Ovary (tissue), 10 donors: ENCODE measurements at regions of chr11 and their contacts with region 1.

Region 1: GRCh38 chr11:65569973-65570918 is at the start of gene ZNRD2:
- DNase-seq: peak; percentile 96 to 98 (median 98)
- H3K4me3 ChIP-seq: peak within 1 kb of the TSS; percentile 83
- H3K27ac ChIP-seq: peak within 1 kb of the TSS; percentile 87 to 91
- H3K4me1 ChIP-seq: peaks cover 8% of the 10 kb centered on the region
- H3K27me3 ChIP-seq: no peaks in the 10 kb centered on the region
- CTCF ChIP-seq: peak; percentile 16 to 80 (median 76)
- EP300 ChIP-seq: peak; percentile 97
- POLR2A ChIP-seq: peak; percentile 86
- total RNA-seq, gene ZNRD2: 26.6 to 59.5 (median 39.2) TPM

Region 2: DNA sequence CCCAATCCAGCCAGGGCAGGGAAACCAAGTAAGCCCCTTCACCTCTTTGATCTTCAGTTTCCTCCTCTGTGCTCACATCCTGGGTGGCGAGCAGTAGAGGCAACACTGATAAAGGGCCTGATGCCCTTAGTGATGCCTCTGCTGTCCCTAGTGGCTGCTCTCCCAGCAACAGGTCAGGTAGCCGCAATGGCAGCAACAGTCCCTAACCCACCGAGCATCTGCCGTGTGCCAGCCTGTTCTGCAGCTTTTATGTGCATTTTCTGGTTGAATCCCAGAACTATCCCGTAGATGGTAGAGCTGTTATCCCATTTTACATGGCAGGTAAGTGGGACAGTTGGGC is 40.1 kb before region 1 on chr11:
- intact Hi-C with region 1: loop called in 1 of 4 experiments (anchors 5 kb)
- DNase-seq: no peak
- H3K4me3 ChIP-seq: no peak overlapping the region
- H3K27ac ChIP-seq: peak overlapping the region; percentile 4 to 56
- H3K4me1 ChIP-seq: peaks cover 22% of the 10 kb centered on the region
- H3K27me3 ChIP-seq: no peaks in the 10 kb centered on the region
- CTCF ChIP-seq: no peak
- EP300 ChIP-seq: no peak
- POLR2A ChIP-seq: no peak

Region 3: GRCh38 chr11:65540297-65541092 is 29.8 kb before region 1 on chr11:
- intact Hi-C with region 1: loop called in 2 of 4 experiments (anchors 1 to 2 kb)
- DNase-seq: peak; percentile 89 to 96 (median 93)
- H3K4me3 ChIP-seq: peak overlapping the region; percentile 51
- H3K27ac ChIP-seq: peak overlapping the region; percentile 84 to 86
- H3K4me1 ChIP-seq: peaks cover 8% of the 10 kb centered on the region
- H3K27me3 ChIP-seq: no peaks in the 10 kb centered on the region
- CTCF ChIP-seq: peak; percentile 71 to 97 (median 92)
- EP300 ChIP-seq: peak; percentile 50
- POLR2A ChIP-seq: peak; percentile 21

Region 4: DNA sequence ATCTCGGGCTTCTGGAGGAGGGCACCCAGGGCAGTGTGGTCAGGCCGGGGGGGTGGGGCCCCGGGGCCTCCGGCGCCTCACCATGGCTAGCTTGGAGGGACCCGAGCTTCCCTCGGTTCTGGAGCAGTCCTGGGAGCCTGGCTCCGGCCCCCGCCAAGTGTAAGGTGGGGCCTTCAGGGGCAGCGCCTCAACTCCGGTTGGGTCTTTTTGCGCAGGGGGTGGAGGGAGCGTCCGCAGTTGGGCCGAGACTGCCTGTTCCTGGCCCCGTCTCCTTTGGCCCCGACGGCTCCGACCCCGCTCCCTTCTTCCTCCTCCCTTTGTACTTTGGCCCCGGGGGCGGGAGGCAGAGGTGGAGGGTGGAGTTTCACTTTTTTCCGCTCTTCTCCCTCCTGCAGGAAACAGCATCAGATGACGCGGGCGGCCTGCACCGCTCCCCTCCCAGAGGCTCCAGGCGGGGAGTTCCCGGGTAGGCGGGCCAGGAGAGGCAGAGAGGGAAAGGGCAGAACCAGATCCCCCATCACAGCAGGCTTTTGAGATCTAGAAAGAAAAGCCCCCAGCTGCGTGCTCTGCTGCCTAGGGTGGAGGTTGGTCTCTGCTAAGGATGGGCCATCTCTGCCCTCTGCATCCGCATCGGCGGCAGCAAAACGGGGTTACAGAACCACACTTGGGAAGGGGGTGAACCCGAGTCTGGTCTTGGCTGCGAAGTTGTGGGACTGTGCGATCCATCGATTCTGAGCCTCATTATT is 43.9 kb after region 1 on chr11 and contains the start of gene MAP3K11:
- intact Hi-C with region 1: loop called in 2 of 4 experiments (anchors 5 kb)
- DNase-seq: peak; percentile 91 to 95 (median 94)
- H3K4me3 ChIP-seq: peak within 1 kb of the TSS; percentile 75
- H3K27ac ChIP-seq: peak within 1 kb of the TSS; percentile 75 to 97
- H3K4me1 ChIP-seq: peaks cover 19% of the 10 kb centered on the region
- H3K27me3 ChIP-seq: no peaks in the 10 kb centered on the region
- CTCF ChIP-seq: no peak
- EP300 ChIP-seq: peak; percentile 28
- POLR2A ChIP-seq: peak; percentile 87
- total RNA-seq, gene MAP3K11: 23.2 to 51.9 (median 46.0) TPM

Region 5: GRCh38 chr11:65652511-65653231 is 82.4 kb after region 1 on chr11:
- intact Hi-C with region 1: loop called in 2 of 4 experiments (anchors 5 kb)
- DNase-seq: peak; percentile 95 to 98 (median 97)
- H3K4me3 ChIP-seq: peak overlapping the region; percentile 63
- H3K27ac ChIP-seq: peak overlapping the region; percentile 74 to 98
- H3K4me1 ChIP-seq: peaks cover 18% of the 10 kb centered on the region
- H3K27me3 ChIP-seq: no peaks in the 10 kb centered on the region
- CTCF ChIP-seq: peak in 2 of 3 donors; percentile 9 to 22
- EP300 ChIP-seq: no peak
- POLR2A ChIP-seq: peak; percentile 70

Region 6: DNA sequence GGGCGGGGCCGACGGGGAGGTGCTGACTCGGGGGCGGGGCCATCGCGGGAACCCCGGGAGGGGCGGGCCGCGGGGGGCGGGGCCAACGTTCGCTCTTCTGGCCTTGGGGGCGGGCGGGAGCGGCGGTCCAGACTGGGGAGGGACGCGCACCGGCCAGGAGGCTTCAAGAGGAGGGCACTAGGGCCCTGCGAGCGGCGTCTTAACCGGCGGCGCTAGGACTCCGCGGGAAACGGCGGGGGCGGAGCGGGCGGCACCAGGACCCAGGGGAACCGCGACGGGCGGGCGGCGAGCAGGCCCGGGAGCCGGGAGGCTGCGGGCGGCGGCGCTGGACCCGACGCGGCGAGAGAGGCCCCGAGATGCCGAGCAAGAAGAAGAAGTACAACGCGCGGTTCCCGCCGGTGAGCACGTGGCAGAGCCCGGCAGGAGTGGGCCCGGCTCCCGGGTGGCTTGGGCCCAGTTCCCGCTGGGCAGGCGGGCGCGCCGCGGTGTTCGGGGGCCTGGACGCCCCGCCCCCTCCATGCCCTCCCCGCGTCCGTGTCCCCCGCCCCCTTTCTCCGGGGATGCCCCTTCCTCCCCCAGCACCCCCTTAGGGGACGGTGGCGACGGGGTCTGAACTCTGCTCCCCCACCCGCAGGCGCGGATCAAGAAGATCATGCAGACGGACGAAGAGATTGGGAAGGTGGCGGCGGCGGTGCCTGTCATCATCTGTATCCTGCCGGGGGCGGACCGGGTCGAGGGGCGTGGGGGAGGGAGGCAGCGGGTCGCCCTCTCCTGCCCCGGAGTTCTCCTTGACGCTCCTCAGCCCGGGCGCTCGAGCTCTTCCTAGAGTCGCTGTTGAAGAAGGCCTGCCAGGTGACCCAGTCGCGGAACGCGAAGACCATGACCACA is 349.1 kb after region 1 on chr11 and contains the start of gene DRAP1:
- intact Hi-C with region 1: no loop called
- DNase-seq: peak; percentile 99
- H3K4me3 ChIP-seq: peak within 1 kb of the TSS; percentile 92
- H3K27ac ChIP-seq: peak within 1 kb of the TSS; percentile 79 to 84
- H3K4me1 ChIP-seq: peaks cover 37% of the 10 kb centered on the region
- H3K27me3 ChIP-seq: no peaks in the 10 kb centered on the region
- CTCF ChIP-seq: no peak
- EP300 ChIP-seq: no peak
- POLR2A ChIP-seq: peak; percentile 63
- total RNA-seq, gene DRAP1: 40.2 to 84.4 (median 78.3) TPM